ENCODE measurements at regions of chr5 and their contacts with region 1.

Region 1: DNA sequence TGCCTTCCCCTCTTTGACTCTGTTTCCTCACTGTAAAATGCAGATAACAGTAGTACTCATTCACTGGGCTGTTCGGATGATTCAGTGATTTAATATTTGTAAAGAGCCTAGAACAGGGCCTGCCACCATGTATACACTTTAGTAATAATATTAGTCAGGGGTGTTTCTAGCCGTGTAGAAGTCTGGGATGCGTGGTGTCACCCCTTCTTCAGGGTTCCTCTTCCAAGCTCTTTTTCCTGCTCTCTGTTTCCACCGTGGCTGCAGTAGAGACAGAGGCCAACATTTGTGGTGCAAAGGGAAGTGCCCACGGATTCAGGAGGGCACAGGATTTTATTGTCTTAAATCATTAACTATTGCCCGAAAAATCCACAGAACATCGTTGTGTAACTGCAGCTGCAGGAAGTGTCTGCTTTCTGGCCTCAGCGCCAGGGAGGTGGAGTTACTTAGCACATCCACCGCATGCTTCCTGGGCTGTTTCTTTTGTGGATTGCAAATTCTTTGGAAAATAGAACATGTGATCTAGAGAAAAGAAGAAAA is 61.7 kb downstream of the TRIO start:
- DNase-seq: peak in 4 of 10 donors; percentile 39 to 61 (median 44)
- H3K4me3 ChIP-seq: peak overlapping the region in 26 of 59 donors; percentile 0 to 44 (median 24)
- H3K27ac ChIP-seq: peak overlapping the region in 24 of 59 donors; percentile 5 to 67 (median 38)
- H3K27me3 ChIP-seq: no peaks in the 10 kb centered on the region
- CTCF ChIP-seq: no peak

Region 2: GRCh38 chr5:14168144-14168792 is 36.6 kb before region 1 on chr5:
- intact Hi-C with region 1: loop called in 1 of 2 experiments (anchors 2 kb)
- DNase-seq: no peak
- H3K4me3 ChIP-seq: no peak overlapping the region
- H3K27ac ChIP-seq: peak overlapping the region in 1 of 59 donors; percentile 41
- H3K27me3 ChIP-seq: no peaks in the 10 kb centered on the region
- CTCF ChIP-seq: no peak